CD8-positive, alpha-beta T cell (primary cell): ENCODE measurements at regions of chr22 and their contacts with region 1.

Region 1: DNA sequence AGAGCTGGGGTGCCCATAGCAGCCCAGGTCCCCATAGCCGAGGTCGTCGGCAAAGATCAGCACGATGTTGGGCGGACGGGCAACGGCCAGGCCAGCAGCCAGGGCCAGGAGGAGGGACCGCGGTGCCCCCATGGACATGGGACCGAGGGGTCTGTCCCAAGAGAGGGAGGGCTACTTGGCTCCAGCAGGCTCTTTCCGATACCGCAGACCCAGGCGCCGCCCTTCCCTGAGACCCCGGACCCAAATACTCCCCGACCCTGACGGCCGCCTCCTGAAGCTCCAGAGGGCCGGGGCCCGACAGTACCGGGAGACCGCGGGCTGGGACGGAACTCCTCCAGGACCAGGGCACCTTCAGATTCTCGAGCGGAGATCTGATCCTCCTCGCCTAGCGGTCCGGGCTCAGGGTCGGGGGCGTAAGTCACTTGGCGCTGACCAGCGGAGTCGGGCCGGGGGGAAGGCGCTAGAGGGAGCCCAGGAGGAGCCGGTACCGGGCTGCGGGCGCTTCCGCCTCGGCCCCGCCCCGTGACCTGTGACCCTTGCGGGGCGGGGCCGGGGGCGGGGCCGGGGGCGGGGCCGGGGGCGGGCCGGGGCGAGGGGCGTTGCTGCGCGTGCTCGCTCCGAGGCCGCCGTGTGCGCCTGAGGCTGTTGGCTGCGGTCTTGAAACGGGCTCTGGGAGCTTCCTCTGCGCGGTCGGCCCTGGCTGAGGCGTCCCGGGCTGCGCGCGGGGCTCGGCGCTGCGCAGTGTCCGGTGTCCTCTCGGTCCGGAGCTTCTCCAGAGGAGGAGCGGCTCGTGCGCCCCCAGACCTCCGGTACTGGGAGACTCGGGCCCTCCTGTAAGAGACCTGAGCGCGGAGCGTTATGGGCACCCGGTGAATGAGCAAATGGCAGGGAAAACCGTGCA is at the start of gene ARSA:
- DNase-seq: peak; percentile 53 to 93 (median 76)
- ATAC-seq: peak; percentile 90
- H3K4me3 ChIP-seq: peak within 1 kb of the TSS; percentile 78 to 91
- H3K4me3 Mint-ChIP-seq: peak within 1 kb of the TSS; percentile 91
- H3K27ac ChIP-seq: peak within 1 kb of the TSS; percentile 62 to 82
- H3K27ac Mint-ChIP-seq: peak within 1 kb of the TSS; percentile 95
- H3K4me1 ChIP-seq: peaks cover 25% of the 10 kb centered on the region
- H3K4me1 Mint-ChIP-seq: peaks cover 20% of the 10 kb centered on the region
- H3K27me3 ChIP-seq: no peaks in the 10 kb centered on the region
- H3K27me3 Mint-ChIP-seq: no peaks in the 10 kb centered on the region
- CTCF ChIP-seq: no peak
- total RNA-seq, gene ARSA: 37.1 to 43.4 TPM

Region 2: DNA sequence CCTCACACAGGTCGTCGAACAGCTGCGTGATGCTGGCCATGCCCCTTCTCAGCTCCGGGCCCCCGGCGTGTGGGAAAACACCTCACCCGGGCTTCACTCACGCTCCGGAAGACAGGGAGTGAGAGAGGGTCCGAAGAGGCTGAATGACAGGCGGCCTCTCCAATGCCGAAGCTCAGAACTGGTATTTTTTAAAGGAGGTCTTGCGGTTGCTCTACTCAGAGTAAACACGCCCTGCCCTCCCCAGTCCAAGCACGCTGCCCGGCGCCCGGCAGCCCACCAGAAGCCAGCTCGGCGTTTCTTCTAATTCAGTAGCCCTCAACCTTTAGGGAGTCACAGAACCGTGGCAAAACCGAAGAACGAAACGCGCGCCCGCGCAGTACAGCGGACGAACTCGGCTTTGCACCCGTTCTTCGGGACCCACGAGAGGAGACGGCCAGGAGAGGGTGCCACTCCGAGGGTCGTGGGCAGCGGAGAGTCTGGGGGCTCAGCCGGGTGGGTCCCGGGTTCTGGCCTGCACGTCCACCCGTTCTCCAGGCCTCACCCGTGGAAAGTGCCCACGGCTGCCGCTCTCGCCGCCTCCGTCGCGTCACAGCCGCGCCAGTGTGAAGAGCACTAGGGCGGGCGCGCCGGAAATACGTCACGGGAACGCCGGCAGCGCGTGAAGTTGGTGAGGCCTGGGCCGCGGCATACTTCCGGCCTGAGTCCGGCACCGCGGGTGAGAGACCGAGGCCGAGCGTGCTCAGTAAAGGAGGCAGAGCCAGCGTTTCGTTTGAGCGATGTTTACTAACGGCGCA is 383.3 kb before region 1 on chr22 and contains the start of gene TUBGCP6:
- CTCF ChIA-PET with region 1: no interaction called
- POLR2A ChIA-PET with region 1: no interaction called
- intact Hi-C with region 1: loop called in 1 of 2 experiments (anchors 2 kb)
- DNase-seq: peak; percentile 77 to 96 (median 91)
- ATAC-seq: peak; percentile 77
- H3K4me3 ChIP-seq: peak within 1 kb of the TSS; percentile 99
- H3K4me3 Mint-ChIP-seq: peak within 1 kb of the TSS; percentile 100
- H3K27ac ChIP-seq: peak within 1 kb of the TSS; percentile 94 to 99
- H3K27ac Mint-ChIP-seq: peak within 1 kb of the TSS; percentile 100
- H3K4me1 ChIP-seq: peaks cover 56% of the 10 kb centered on the region
- H3K4me1 Mint-ChIP-seq: peaks cover 51% of the 10 kb centered on the region
- H3K27me3 ChIP-seq: no peaks in the 10 kb centered on the region
- H3K27me3 Mint-ChIP-seq: no peaks in the 10 kb centered on the region
- CTCF ChIP-seq: peak; percentile 27
- total RNA-seq, gene TUBGCP6: 121 to 122 TPM

Region 3: GRCh38 chr22:50435291-50436014 is 192.4 kb before region 1 on chr22:
- CTCF ChIA-PET with region 1: no interaction called
- POLR2A ChIA-PET with region 1: no interaction called
- intact Hi-C with region 1: no loop called
- DNase-seq: peak in 1 of 9 experiments; percentile 1
- ATAC-seq: no peak
- H3K4me3 ChIP-seq: no peak overlapping the region
- H3K4me3 Mint-ChIP-seq: no peak overlapping the region
- H3K27ac ChIP-seq: no peak overlapping the region
- H3K27ac Mint-ChIP-seq: no peak overlapping the region
- H3K4me1 ChIP-seq: no peaks in the 10 kb centered on the region
- H3K4me1 Mint-ChIP-seq: no peaks in the 10 kb centered on the region
- H3K27me3 ChIP-seq: no peaks in the 10 kb centered on the region
- H3K27me3 Mint-ChIP-seq: no peaks in the 10 kb centered on the region
- CTCF ChIP-seq: no peak

Region 4: DNA sequence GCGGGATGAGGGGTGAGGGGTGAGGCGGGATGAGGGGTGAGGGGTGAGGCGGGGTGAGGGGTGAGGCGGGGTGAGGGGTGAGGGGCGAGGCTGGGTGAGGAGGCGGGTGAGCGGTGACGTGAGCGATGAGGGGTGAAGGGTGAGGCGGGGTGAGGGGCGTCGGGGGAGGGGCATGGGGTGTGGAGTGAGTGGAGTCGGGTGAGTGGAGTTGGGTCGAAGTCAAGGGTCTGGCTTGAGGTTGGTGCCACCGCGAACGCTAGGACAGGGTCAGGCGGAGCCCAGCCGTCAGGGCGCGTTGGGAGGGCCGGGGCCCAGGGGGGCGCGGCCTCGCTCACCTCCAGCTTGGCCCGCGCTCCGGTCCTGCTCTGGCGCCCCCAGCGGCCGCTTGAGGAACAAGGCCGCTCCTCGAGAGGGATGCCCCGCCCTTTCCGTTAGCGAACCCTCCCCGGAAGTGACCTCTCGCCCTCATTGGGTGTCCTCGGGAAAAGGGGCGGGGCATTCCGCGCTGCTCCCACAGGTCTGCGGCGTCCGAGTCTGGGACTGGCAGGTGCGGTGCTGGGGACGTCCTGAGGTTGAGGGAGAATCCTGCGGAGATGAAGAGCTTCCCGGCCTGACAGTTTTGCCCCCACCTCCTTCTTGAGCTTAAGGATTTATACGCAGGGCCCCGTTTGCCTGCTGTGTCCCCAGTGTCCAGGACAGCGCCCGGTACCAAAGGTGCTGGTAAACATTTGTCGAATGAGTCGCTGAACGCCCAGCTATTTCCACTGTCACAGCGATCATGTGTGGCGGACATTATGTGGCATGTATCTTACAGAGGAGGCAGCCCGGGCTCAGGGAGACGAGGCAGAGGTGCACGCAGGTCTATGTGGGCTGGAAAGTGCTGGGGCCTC is 65.1 kb before region 1 on chr22 and contains the start of gene SYCE3:
- CTCF ChIA-PET with region 1: interaction called, 3 read pairs
- POLR2A ChIA-PET with region 1: no interaction called
- intact Hi-C with region 1: loop called in 1 of 2 experiments (anchors 2 kb)
- DNase-seq: peak; percentile 93 to 98 (median 97)
- ATAC-seq: peak; percentile 98
- H3K4me3 ChIP-seq: peak within 1 kb of the TSS; percentile 57 to 67
- H3K4me3 Mint-ChIP-seq: peak within 1 kb of the TSS; percentile 94
- H3K27ac ChIP-seq: peak within 1 kb of the TSS; percentile 17 to 47
- H3K27ac Mint-ChIP-seq: peak within 1 kb of the TSS; percentile 91
- H3K4me1 ChIP-seq: peaks cover 10% of the 10 kb centered on the region
- H3K4me1 Mint-ChIP-seq: peaks cover 20% of the 10 kb centered on the region
- H3K27me3 ChIP-seq: no peaks in the 10 kb centered on the region
- H3K27me3 Mint-ChIP-seq: no peaks in the 10 kb centered on the region
- CTCF ChIP-seq: peak; percentile 91
- total RNA-seq, gene SYCE3: not detected

Region 5: GRCh38 chr22:50599786-50600455 is 28.0 kb before region 1 on chr22:
- CTCF ChIA-PET with region 1: no interaction called
- POLR2A ChIA-PET with region 1: no interaction called
- intact Hi-C with region 1: loop called in 1 of 2 experiments (anchors 1 kb)
- DNase-seq: peak; percentile 46 to 76 (median 68)
- ATAC-seq: peak; percentile 99
- H3K4me3 ChIP-seq: no peak overlapping the region
- H3K4me3 Mint-ChIP-seq: peak overlapping the region; percentile 56
- H3K27ac ChIP-seq: no peak overlapping the region
- H3K27ac Mint-ChIP-seq: no peak overlapping the region
- H3K4me1 ChIP-seq: no peaks in the 10 kb centered on the region
- H3K4me1 Mint-ChIP-seq: peaks cover 13% of the 10 kb centered on the region
- H3K27me3 ChIP-seq: peaks cover 13 to 32% of the 10 kb centered on the region in 2 experiments
- H3K27me3 Mint-ChIP-seq: peaks cover 31% of the 10 kb centered on the region
- CTCF ChIP-seq: no peak

Region 6: GRCh38 chr22:50641696-50642607 is 14.1 kb after region 1 on chr22:
- CTCF ChIA-PET with region 1: no interaction called
- POLR2A ChIA-PET with region 1: no interaction called
- intact Hi-C with region 1: no loop called
- DNase-seq: peak in 2 of 9 experiments; percentile 22 to 42
- ATAC-seq: peak; percentile 36
- H3K4me3 ChIP-seq: no peak overlapping the region
- H3K4me3 Mint-ChIP-seq: no peak overlapping the region
- H3K27ac ChIP-seq: no peak overlapping the region
- H3K27ac Mint-ChIP-seq: no peak overlapping the region
- H3K4me1 ChIP-seq: no peaks in the 10 kb centered on the region
- H3K4me1 Mint-ChIP-seq: no peaks in the 10 kb centered on the region
- H3K27me3 ChIP-seq: peaks cover 0 to 6% of the 10 kb centered on the region in 2 experiments
- H3K27me3 Mint-ChIP-seq: peaks cover 18% of the 10 kb centered on the region
- CTCF ChIP-seq: no peak

Region 7: GRCh38 chr22:50691521-50691920 is 63.6 kb after region 1 on chr22:
- CTCF ChIA-PET with region 1: no interaction called
- POLR2A ChIA-PET with region 1: no interaction called
- intact Hi-C with region 1: loop called in 1 of 2 experiments (anchors 1 kb)
- DNase-seq: peak in 4 of 9 experiments; percentile 27 to 63 (median 42)
- ATAC-seq: no peak
- H3K4me3 ChIP-seq: no peak overlapping the region
- H3K4me3 Mint-ChIP-seq: no peak overlapping the region
- H3K27ac ChIP-seq: no peak overlapping the region
- H3K27ac Mint-ChIP-seq: no peak overlapping the region
- H3K4me1 ChIP-seq: no peaks in the 10 kb centered on the region
- H3K4me1 Mint-ChIP-seq: no peaks in the 10 kb centered on the region
- H3K27me3 ChIP-seq: peaks cover 0 to 2% of the 10 kb centered on the region in 2 experiments
- H3K27me3 Mint-ChIP-seq: peaks cover 4% of the 10 kb centered on the region
- CTCF ChIP-seq: peak; percentile 42